ENCODE measurements at regions of chr6 and their contacts with region 1.

Region 1: DNA sequence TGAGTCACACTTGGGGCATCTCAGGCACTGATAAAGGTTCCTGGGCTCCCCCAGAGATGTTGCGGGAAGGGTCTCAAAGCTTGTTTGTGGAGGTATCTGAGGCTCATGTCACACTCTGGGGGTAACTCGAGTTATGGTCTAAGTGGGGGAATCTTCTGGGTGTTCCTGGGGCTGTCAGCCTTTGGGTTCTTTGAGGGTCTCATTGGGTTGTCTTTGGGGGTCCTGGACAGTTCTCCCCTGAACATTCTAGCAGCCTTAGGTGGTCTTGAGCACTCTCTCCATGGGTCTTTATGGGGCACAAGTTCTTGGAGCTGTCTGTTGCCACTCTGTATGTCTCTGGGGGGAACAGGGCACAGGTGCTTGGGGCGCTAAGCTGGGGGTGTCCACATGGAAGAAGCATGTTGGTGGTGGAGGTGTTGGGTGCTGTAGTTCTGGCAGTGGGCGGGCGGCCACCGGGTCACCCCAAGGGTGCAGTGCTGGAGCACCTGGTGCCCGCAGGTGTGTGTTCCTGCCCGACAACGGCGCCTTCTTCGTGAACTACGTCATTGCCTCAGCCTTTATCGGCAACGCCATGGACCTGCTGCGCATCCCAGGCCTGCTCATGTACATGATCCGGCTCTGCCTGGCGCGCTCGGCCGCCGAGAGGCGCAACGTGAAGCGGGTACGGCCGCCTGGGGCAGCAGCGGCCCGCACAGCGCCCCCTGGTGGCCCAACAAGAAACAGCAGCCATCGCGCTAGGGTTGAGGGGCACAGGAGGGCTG is 7.1 kb upstream of the CAPN11 start:
- DNase-seq: peak; percentile 92
- H3K4me3 Mint-ChIP-seq: no peak overlapping the region
- H3K27ac Mint-ChIP-seq: no peak overlapping the region
- H3K4me1 Mint-ChIP-seq: peaks cover 6% of the 10 kb centered on the region
- H3K27me3 Mint-ChIP-seq: no peaks in the 10 kb centered on the region
- CTCF ChIP-seq: peak; percentile 100

Region 2: DNA sequence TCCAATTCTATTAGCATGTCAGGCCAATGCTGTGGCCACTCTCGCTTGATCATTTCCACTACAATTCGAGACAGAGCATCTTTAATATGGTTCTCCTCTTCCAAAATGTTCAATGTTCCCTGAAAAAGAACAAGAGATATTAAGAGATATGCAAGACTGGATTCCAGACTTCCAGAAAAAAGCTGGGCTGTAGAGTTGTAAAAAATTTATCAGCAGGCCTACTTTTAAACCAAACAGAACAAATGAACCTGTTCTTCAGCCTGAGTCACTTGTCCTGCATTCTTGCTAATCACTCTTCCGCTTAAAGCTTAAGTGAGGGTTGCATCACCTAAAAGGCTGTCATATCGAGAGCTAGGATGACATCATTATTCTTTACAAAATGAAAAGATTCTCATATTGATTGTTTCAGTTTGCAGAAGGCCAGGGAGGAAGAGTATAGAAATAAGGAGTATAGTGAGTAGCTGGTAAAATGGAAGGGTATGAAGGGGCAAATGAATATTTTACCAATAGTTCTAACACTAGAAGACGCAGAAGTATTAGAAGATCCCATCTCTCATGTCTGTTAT is 580.6 kb before region 1 on chr6:
- CTCF ChIA-PET with region 1: interaction called, 11 read pairs
- intact Hi-C with region 1: no loop called
- DNase-seq: no peak
- H3K4me3 Mint-ChIP-seq: no peak overlapping the region
- H3K27ac Mint-ChIP-seq: peak overlapping the region; percentile 39
- H3K4me1 Mint-ChIP-seq: peaks cover 8% of the 10 kb centered on the region
- H3K27me3 Mint-ChIP-seq: no peaks in the 10 kb centered on the region
- CTCF ChIP-seq: no peak